CD4-positive, alpha-beta memory T cell (primary cell): ENCODE measurements at regions of chr3 and their contacts with region 1.

Region 1: DNA sequence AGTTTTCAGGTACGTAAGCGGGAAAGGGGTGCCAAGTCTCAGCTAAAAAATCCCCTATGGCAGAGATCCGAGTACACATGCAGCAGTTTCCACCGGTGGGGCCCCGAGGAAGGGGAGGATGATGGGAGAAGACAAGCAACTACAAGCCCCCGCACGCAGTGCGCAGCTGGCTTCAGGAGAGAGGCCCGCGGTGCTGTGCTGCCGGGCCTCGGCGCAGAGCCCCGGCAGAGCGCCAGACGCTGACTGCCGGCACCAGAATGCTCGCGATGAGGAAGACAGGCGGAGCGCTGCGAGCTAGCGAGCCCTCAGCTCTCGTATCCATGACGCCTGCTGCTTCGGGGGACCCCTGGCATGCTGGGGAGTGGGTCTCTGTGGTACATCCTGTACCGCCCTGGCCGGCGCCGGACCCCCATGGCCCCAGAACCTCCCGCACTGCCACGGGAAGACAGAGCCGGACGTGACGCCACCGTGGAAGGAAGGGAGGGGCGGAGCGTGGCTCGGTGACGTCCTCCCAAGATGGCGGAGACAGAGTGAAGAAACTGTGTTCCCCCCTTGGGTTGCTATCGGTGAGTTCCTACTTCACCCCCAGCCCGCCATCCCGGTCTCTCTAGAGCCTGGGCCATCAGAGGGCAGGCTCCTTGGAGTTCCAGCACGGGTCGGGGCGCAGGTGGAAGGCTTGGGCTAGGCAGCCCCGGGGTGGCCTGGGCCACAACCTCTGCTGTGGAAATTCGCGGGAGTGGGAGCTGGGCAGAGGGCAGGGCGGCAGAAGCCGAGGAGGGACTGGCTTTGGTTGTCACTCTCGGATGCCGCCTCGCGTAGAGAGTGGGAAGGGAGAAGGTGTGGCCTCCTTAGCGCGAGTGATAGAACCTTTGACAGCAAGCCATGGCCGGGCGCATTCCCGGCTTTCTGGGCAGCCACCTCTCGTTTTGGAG is at the start of gene MYNN:
- DNase-seq: peak; percentile 92 to 95 (median 94)
- H3K4me3 ChIP-seq: peak within 1 kb of the TSS; percentile 83 to 94
- H3K4me3 Mint-ChIP-seq: peak within 1 kb of the TSS; percentile 92 to 99 (median 98)
- H3K27ac ChIP-seq: peak within 1 kb of the TSS; percentile 99
- H3K27ac Mint-ChIP-seq: peak within 1 kb of the TSS; percentile 98 to 100 (median 99)
- H3K4me1 ChIP-seq: peaks cover 36% of the 10 kb centered on the region
- H3K4me1 Mint-ChIP-seq: peaks cover 27 to 70% (median 43%) of the 10 kb centered on the region in 4 donors
- H3K27me3 ChIP-seq: no peaks in the 10 kb centered on the region
- H3K27me3 Mint-ChIP-seq: peaks cover 0 to 11% of the 10 kb centered on the region in 2 donors
- total RNA-seq, gene MYNN: 21.1 to 23.0 TPM

Region 2: DNA sequence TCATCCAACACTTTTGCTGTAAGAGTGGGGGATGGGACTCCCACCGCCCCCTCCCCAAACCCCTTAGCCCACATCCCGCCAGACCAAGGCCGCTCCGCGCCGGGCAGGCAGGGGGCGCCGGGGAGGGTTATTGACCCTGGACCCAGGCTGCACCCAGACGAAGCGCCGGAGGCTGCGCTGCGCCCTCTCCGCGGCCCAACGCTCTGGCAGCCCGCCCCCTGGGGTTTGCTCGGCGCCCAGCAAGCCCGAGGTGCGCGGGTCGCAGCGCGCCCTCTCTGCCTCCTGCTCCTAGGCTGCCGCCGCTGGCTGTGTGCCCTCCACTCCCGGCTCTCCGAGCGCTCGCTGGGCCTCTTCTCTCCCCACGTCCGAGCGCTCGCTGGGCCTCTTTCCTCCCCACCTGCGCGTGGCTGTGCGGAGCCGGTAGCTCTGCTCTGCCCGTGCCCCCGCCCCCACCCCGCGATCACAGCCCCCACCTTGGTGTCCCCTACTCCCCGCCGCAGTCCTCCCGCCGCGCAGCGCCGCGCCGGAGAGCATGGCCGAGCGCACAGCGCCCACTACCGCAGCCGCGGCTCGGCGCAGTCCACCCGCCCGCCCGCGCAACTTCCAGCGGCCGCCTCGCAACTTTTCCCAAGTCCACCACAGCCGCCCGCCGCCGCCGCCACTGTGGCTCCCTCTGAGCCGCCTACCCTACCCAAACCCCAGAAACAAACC is 110.9 kb before region 1 on chr3:
- CTCF ChIA-PET with region 1: no interaction called
- POLR2A ChIA-PET with region 1: no interaction called
- intact Hi-C with region 1: loop called (anchors 5 kb)
- DNase-seq: peak in 4 of 5 donors; percentile 24 to 44 (median 28)
- H3K4me3 ChIP-seq: peak overlapping the region; percentile 42 to 60
- H3K4me3 Mint-ChIP-seq: peak overlapping the region; percentile 74 to 97 (median 90)
- H3K27ac ChIP-seq: no peak overlapping the region
- H3K27ac Mint-ChIP-seq: no peak overlapping the region
- H3K4me1 ChIP-seq: peaks cover 47% of the 10 kb centered on the region
- H3K4me1 Mint-ChIP-seq: peaks cover 24 to 56% (median 37%) of the 10 kb centered on the region in 4 donors
- H3K27me3 ChIP-seq: peaks cover 82% of the 10 kb centered on the region
- H3K27me3 Mint-ChIP-seq: peaks cover 62 to 72% of the 10 kb centered on the region in 2 donors

Region 3: GRCh38 chr3:169812332-169813235 is 39.4 kb after region 1 on chr3 and contains the starts of genes LRRC34 and LRRIQ4:
- CTCF ChIA-PET with region 1: interaction called, 3 read pairs
- POLR2A ChIA-PET with region 1: interaction called, 16 read pairs
- intact Hi-C with region 1: loop called (anchors 1 kb)
- DNase-seq: peak; percentile 45 to 68 (median 55)
- H3K4me3 ChIP-seq: peak within 1 kb of the TSS; percentile 65 to 80
- H3K4me3 Mint-ChIP-seq: peak within 1 kb of the TSS; percentile 79 to 98 (median 86)
- H3K27ac ChIP-seq: peak within 1 kb of the TSS; percentile 40
- H3K27ac Mint-ChIP-seq: peak within 1 kb of the TSS; percentile 55 to 87 (median 65)
- H3K4me1 ChIP-seq: peaks cover 21% of the 10 kb centered on the region
- H3K4me1 Mint-ChIP-seq: peaks cover 17 to 29% (median 19%) of the 10 kb centered on the region in 4 donors
- H3K27me3 ChIP-seq: no peaks in the 10 kb centered on the region
- H3K27me3 Mint-ChIP-seq: peaks cover 0 to under 1% of the 10 kb centered on the region in 2 donors
- total RNA-seq, gene LRRC34: 0.33 to 0.47 TPM
- total RNA-seq, gene LRRIQ4: not detected

Region 4: GRCh38 chr3:170196833-170197232 is 423.7 kb after region 1 on chr3:
- CTCF ChIA-PET with region 1: no interaction called
- POLR2A ChIA-PET with region 1: no interaction called
- intact Hi-C with region 1: no loop called
- DNase-seq: no peak
- H3K4me3 ChIP-seq: no peak overlapping the region
- H3K4me3 Mint-ChIP-seq: no peak overlapping the region
- H3K27ac ChIP-seq: no peak overlapping the region
- H3K27ac Mint-ChIP-seq: no peak overlapping the region
- H3K4me1 ChIP-seq: no peaks in the 10 kb centered on the region
- H3K4me1 Mint-ChIP-seq: no peaks in the 10 kb centered on the region
- H3K27me3 ChIP-seq: no peaks in the 10 kb centered on the region
- H3K27me3 Mint-ChIP-seq: peaks cover 7 to 14% of the 10 kb centered on the region in 2 donors

Region 5: GRCh38 chr3:170221924-170222646 is 448.9 kb after region 1 on chr3 and contains the start of gene PRKCI:
- CTCF ChIA-PET with region 1: interaction called, 7 read pairs
- POLR2A ChIA-PET with region 1: interaction called, 12 read pairs
- intact Hi-C with region 1: no loop called
- DNase-seq: peak; percentile 86 to 89 (median 88)
- H3K4me3 ChIP-seq: peak within 1 kb of the TSS; percentile 91 to 97
- H3K4me3 Mint-ChIP-seq: peak within 1 kb of the TSS; percentile 91 to 99 (median 94)
- H3K27ac ChIP-seq: peak within 1 kb of the TSS; percentile 72
- H3K27ac Mint-ChIP-seq: peak within 1 kb of the TSS; percentile 92 to 99 (median 95)
- H3K4me1 ChIP-seq: peaks cover 25% of the 10 kb centered on the region
- H3K4me1 Mint-ChIP-seq: peaks cover 24 to 39% (median 29%) of the 10 kb centered on the region in 4 donors
- H3K27me3 ChIP-seq: no peaks in the 10 kb centered on the region
- H3K27me3 Mint-ChIP-seq: no peaks in the 10 kb centered on the region
- total RNA-seq, gene PRKCI: 18.0 to 27.7 TPM